ENCODE measurements at regions of chr3 and their contacts with region 1.

Region 1: GRCh38 chr3:81218023-81218422 is 543.4 kb downstream of the GBE1 start:
- DNase-seq: peak; percentile 41
- H3K4me3 Mint-ChIP-seq: no peak overlapping the region
- H3K27ac Mint-ChIP-seq: no peak overlapping the region
- H3K4me1 Mint-ChIP-seq: no peaks in the 10 kb centered on the region
- H3K27me3 Mint-ChIP-seq: no peaks in the 10 kb centered on the region
- CTCF ChIP-seq: peak; percentile 12

Region 2: GRCh38 chr3:80472451-80472850 is 745.6 kb before region 1 on chr3:
- CTCF ChIA-PET with region 1: no interaction called
- intact Hi-C with region 1: no loop called
- DNase-seq: no peak
- H3K4me3 Mint-ChIP-seq: no peak overlapping the region
- H3K27ac Mint-ChIP-seq: no peak overlapping the region
- H3K4me1 Mint-ChIP-seq: no peaks in the 10 kb centered on the region
- H3K27me3 Mint-ChIP-seq: no peaks in the 10 kb centered on the region
- CTCF ChIP-seq: no peak

Region 3: GRCh38 chr3:81242871-81243270 is 24.8 kb after region 1 on chr3:
- CTCF ChIA-PET with region 1: no interaction called
- intact Hi-C with region 1: loop called (anchors 1 kb)
- DNase-seq: no peak
- H3K4me3 Mint-ChIP-seq: no peak overlapping the region
- H3K27ac Mint-ChIP-seq: no peak overlapping the region
- H3K4me1 Mint-ChIP-seq: no peaks in the 10 kb centered on the region
- H3K27me3 Mint-ChIP-seq: no peaks in the 10 kb centered on the region
- CTCF ChIP-seq: no peak

Region 4: DNA sequence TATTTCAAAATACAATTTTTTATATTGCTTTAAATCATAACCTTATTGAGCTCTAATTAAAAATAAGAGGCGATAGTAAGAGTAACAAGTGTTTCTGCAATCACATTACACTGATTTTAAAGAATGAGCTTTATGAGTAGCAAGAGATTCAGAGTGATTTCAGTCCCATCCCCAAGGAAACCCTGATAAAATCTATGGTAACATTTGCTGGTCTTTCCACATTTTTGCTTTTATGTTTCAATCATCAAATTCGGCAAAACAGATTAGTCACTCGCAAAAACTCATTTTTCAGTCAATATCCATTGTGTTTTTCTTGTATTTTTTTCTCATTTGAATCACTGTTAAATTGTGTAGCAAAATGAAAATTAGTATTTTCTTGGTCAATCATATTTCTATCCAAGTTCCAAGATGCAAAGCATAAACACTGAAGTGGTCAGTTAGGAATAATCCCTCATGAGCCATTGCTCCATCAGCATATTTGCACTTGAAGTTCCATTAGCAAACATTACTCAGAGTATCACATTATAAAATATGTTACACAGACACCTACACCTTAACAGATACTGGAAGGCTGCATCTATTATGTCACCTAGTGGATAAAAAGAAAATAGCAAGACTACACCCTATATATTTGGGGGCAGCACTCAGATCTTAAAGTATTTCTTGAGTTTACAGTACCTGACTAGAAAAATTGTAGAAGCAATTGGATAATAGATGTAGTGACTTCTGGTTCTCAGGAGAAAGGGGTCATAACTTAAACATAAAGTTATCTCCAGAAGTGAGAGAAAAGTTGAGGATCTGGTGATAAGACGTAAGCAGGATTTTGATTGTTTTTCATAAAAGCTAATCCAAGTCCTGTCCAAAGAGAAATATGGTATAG is 120.9 kb after region 1 on chr3:
- CTCF ChIA-PET with region 1: no interaction called
- intact Hi-C with region 1: loop called (anchors 1 kb)
- DNase-seq: no peak
- H3K4me3 Mint-ChIP-seq: no peak overlapping the region
- H3K27ac Mint-ChIP-seq: no peak overlapping the region
- H3K4me1 Mint-ChIP-seq: no peaks in the 10 kb centered on the region
- H3K27me3 Mint-ChIP-seq: no peaks in the 10 kb centered on the region
- CTCF ChIP-seq: no peak

Region 5: DNA sequence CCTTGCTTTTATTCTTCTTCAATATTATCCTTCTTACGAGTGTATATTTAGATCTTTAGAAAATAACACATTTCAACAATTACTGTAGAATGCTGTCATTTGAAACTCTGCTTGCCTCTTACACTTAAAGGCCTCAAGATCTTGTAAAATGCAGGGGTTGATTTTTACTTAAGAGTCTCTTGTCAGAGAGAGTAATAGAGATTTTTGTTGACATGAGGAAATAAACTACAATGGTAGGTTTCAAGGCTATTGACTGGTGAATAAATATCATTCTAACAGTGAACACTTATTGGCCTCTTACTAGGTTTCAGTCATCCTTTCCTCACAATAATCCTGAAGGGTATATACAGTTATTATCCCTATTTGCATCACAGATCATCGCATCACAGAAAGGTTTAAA is 198.8 kb after region 1 on chr3:
- CTCF ChIA-PET with region 1: no interaction called
- intact Hi-C with region 1: no loop called
- DNase-seq: no peak
- H3K4me3 Mint-ChIP-seq: no peak overlapping the region
- H3K27ac Mint-ChIP-seq: no peak overlapping the region
- H3K4me1 Mint-ChIP-seq: no peaks in the 10 kb centered on the region
- H3K27me3 Mint-ChIP-seq: no peaks in the 10 kb centered on the region
- CTCF ChIP-seq: no peak

Region 6: GRCh38 chr3:81462921-81463320 is 244.9 kb after region 1 on chr3:
- CTCF ChIA-PET with region 1: no interaction called
- intact Hi-C with region 1: loop called (anchors 10 kb)
- DNase-seq: no peak
- H3K4me3 Mint-ChIP-seq: no peak overlapping the region
- H3K27ac Mint-ChIP-seq: no peak overlapping the region
- H3K4me1 Mint-ChIP-seq: no peaks in the 10 kb centered on the region
- H3K27me3 Mint-ChIP-seq: no peaks in the 10 kb centered on the region
- CTCF ChIP-seq: no peak

Region 7: DNA sequence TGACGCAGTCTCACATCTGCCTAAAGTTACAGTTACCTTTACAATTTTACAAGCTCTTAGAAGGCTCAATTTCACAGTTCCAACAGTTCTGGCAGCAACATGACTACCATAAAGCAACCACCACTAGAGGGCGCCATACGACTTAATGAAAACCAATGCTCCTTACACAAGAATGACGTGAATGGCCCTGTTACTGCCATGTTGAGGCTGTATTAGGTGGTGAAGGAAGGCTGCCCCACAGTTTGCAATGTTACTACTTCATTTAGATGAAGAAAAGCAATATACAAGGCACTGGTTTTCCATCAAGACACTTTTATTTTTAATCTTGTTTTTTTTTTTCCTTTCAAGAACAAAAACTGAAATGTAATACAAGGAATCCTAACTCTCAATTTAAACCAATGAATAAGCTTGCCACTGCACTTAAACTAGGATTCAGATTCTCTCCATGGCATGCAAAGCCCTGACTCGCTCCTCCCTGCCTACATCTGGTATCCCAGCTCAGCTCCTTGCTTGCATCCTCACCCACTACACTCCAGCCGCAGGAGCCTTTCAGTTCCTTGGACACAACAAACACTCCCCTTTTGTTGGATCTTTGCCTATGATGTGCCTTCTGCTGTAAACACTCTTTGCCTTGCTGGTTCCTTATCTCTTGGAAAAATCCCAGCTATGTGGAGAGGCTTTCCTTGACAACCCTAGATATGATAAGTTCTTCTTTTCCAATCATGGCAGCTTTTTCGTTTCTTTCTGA is 272.7 kb after region 1 on chr3:
- CTCF ChIA-PET with region 1: no interaction called
- intact Hi-C with region 1: loop called (anchors 2 kb)
- DNase-seq: peak; percentile 79
- H3K4me3 Mint-ChIP-seq: no peak overlapping the region
- H3K27ac Mint-ChIP-seq: no peak overlapping the region
- H3K4me1 Mint-ChIP-seq: no peaks in the 10 kb centered on the region
- H3K27me3 Mint-ChIP-seq: no peaks in the 10 kb centered on the region
- CTCF ChIP-seq: peak; percentile 49

Region 8: DNA sequence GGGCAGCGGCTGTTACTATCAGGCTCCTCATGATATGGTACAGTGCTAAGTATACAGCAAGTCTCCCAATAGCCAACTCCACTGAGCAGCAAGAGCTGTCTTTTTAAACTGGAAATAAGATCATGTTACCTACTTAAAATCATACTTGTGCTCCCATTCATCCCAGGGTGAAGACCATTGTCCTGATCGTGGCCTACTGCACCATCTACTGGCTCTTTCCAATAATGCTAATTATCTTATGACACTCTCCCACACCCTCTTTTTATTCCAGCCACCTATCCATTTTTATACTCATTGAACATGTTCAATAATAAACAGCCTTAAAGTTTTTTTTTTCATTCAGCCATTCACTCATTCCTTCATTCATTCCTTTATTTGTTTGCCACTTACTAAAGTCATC is 425.7 kb after region 1 on chr3:
- CTCF ChIA-PET with region 1: no interaction called
- intact Hi-C with region 1: loop called (anchors 5 kb)
- DNase-seq: peak; percentile 6
- H3K4me3 Mint-ChIP-seq: no peak overlapping the region
- H3K27ac Mint-ChIP-seq: no peak overlapping the region
- H3K4me1 Mint-ChIP-seq: no peaks in the 10 kb centered on the region
- H3K27me3 Mint-ChIP-seq: no peaks in the 10 kb centered on the region
- CTCF ChIP-seq: no peak

Measured in Calu3 (cell line).